Gastrocnemius medialis (tissue), 4 donors: ENCODE measurements at regions of chr1 and their contacts with region 1.

Region 1: DNA sequence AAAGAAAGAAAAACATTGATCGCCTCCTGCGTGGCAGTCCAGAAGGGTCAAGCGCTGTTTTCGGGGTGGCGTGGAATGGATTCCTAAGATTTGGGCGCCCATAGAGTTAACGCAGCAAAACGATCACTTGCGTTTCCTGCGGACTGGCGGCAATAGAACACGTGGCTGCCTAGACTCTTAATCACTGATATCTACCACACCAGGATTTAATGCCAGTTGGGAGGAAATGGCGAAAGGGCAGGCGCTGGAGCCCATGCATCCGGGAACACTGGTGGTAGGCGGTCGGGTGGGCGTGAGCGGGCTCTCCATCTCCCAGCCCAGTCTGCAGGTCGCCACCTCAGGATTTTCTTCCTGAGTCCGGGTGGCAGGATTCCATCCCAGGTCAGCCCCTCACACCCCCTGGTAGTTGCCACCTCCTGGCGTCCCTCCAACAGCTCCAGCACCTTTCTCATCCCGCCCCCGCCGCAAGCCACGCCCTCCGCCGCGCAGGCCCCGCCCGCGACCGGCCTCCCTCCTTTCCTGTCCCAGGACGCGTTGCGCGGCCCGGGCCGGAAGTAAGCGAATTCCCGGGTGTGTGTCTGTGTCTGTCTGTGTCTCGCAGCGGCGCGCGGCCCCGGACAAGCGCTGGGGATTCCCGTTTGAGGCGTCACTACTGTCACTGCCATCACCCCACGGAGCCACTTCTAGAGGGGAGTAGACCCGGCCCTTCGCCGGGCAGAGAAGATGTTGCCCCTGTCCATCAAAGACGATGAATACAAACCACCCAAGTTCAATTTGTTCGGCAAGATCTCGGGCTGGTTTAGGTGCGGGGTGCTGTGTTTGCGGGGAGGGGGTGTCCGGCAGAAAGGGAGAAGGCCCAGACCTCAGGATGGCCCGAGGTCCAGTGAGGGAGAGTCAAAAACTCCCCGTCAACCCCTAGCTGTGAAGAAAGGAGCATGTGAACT is at the start of gene SLC30A7:
- DNase-seq: peak; percentile 87 to 92
- ATAC-seq: peak; percentile 80 to 86
- H3K4me3 ChIP-seq: peak within 1 kb of the TSS; percentile 66 to 99 (median 86)
- H3K27ac ChIP-seq: peak within 1 kb of the TSS; percentile 94 to 99 (median 94)
- H3K4me1 ChIP-seq: peaks cover 21 to 29% of the 10 kb centered on the region in 2 donors
- H3K27me3 ChIP-seq: no peaks in the 10 kb centered on the region
- CTCF ChIP-seq: no peak
- POLR2A ChIP-seq: peak; percentile 60 to 79
- total RNA-seq, gene SLC30A7: 1.5 to 6.2 (median 3.5) TPM

Region 2: GRCh38 chr1:100414693-100415497 is 480.9 kb before region 1 on chr1:
- in situ Hi-C with region 1: no loop called
- intact Hi-C with region 1: no loop called
- DNase-seq: no peak
- ATAC-seq: peak; percentile 58 to 83
- H3K4me3 ChIP-seq: no peak overlapping the region
- H3K27ac ChIP-seq: peak overlapping the region in 3 of 4 donors; percentile 6 to 53 (median 40)
- H3K4me1 ChIP-seq: peaks cover 0 to 20% of the 10 kb centered on the region in 2 donors
- H3K27me3 ChIP-seq: no peaks in the 10 kb centered on the region
- CTCF ChIP-seq: no peak
- POLR2A ChIP-seq: no peak

Region 3: GRCh38 chr1:101025657-101026504 is 130.1 kb after region 1 on chr1 and contains the start of gene DPH5:
- in situ Hi-C with region 1: no loop called
- intact Hi-C with region 1: loop called (anchors 2 kb)
- DNase-seq: peak; percentile 85 to 90
- ATAC-seq: peak; percentile 92 to 98
- H3K4me3 ChIP-seq: peak within 1 kb of the TSS; percentile 73 to 87 (median 82)
- H3K27ac ChIP-seq: peak within 1 kb of the TSS; percentile 92 to 95 (median 94)
- H3K4me1 ChIP-seq: peaks cover 28 to 34% of the 10 kb centered on the region in 2 donors
- H3K27me3 ChIP-seq: no peaks in the 10 kb centered on the region
- CTCF ChIP-seq: no peak
- POLR2A ChIP-seq: peak; percentile 66 to 80
- total RNA-seq, gene DPH5: 9.4 to 30.0 (median 22.2) TPM